ENCODE measurements at regions of chr6 and their contacts with region 1.

Region 1: GRCh38 chr6:2848851-2849250 is 7.2 kb upstream of the SERPINB1 start:
- DNase-seq: peak; percentile 30 to 87 (median 75)
- ATAC-seq: peak; percentile 88
- H3K4me3 ChIP-seq: no peak overlapping the region
- H3K4me3 Mint-ChIP-seq: peak overlapping the region; percentile 27
- H3K27ac ChIP-seq: peak overlapping the region; percentile 1 to 26
- H3K27ac Mint-ChIP-seq: peak overlapping the region; percentile 92
- H3K4me1 ChIP-seq: peaks cover 27% of the 10 kb centered on the region
- H3K4me1 Mint-ChIP-seq: peaks cover 40% of the 10 kb centered on the region
- H3K27me3 ChIP-seq: no peaks in the 10 kb centered on the region
- H3K27me3 Mint-ChIP-seq: no peaks in the 10 kb centered on the region
- CTCF ChIP-seq: no peak

Region 2: GRCh38 chr6:1911474-1911873 is 937.4 kb before region 1 on chr6:
- CTCF ChIA-PET with region 1: no interaction called
- POLR2A ChIA-PET with region 1: no interaction called
- intact Hi-C with region 1: no loop called
- DNase-seq: no peak
- ATAC-seq: no peak
- H3K4me3 ChIP-seq: no peak overlapping the region
- H3K4me3 Mint-ChIP-seq: no peak overlapping the region
- H3K27ac ChIP-seq: no peak overlapping the region
- H3K27ac Mint-ChIP-seq: no peak overlapping the region
- H3K4me1 ChIP-seq: no peaks in the 10 kb centered on the region
- H3K4me1 Mint-ChIP-seq: no peaks in the 10 kb centered on the region
- H3K27me3 ChIP-seq: no peaks in the 10 kb centered on the region
- H3K27me3 Mint-ChIP-seq: no peaks in the 10 kb centered on the region
- CTCF ChIP-seq: no peak

Region 3: GRCh38 chr6:2862712-2863181 is 13.9 kb after region 1 on chr6:
- CTCF ChIA-PET with region 1: interaction called, 41 read pairs
- POLR2A ChIA-PET with region 1: interaction called, 11 read pairs
- intact Hi-C with region 1: no loop called
- DNase-seq: peak in 3 of 9 experiments; percentile 28 to 35 (median 32)
- ATAC-seq: no peak
- H3K4me3 ChIP-seq: no peak overlapping the region
- H3K4me3 Mint-ChIP-seq: no peak overlapping the region
- H3K27ac ChIP-seq: peak overlapping the region in 1 of 2 experiments; percentile 80
- H3K27ac Mint-ChIP-seq: peak overlapping the region; percentile 93
- H3K4me1 ChIP-seq: peaks cover 50% of the 10 kb centered on the region
- H3K4me1 Mint-ChIP-seq: peaks cover 64% of the 10 kb centered on the region
- H3K27me3 ChIP-seq: no peaks in the 10 kb centered on the region
- H3K27me3 Mint-ChIP-seq: no peaks in the 10 kb centered on the region
- CTCF ChIP-seq: no peak

Region 4: DNA sequence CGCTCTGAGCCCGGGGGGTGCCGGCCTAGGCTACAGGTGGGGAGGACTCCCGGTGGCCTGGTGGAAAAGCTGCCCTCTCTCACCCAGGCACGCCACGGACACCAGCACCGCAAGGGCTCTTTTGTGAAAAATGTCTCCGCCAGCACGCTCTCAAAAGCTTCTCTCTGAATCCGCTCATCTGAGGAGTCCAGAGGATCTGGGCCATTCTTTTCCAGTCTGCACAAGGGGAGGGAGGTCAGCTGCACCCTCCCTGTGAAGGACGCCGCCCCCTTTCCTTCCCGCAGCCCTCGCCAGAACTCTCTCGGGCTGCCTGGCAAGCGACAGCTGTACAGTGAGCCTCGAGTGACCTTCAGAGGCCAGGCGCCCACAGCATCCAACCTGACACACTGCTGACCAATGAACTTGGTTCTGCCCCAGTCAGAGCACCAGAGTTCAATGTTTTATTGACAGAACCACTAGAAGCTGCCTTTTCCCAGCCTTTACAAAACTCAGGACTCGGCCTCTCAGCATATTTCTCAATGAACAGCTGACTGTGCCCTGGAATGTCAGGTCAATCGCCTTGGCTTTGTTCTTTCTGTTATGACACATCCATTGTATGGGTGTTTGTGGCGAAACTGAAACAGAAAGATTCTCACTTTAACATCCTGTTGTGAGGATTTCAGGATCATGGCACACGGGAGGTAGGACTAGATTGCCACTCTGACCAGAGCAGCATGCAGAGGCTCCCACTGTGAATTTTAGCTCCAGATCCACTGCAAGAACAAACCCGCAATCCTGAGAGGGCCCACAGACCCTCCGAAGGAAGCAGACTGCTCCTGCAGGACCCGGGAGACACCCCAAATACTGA is 27.6 kb after region 1 on chr6:
- CTCF ChIA-PET with region 1: interaction called, 8 read pairs
- POLR2A ChIA-PET with region 1: interaction called, 14 read pairs
- intact Hi-C with region 1: loop called in 1 of 2 experiments (anchors 2 kb)
- DNase-seq: peak in 3 of 9 experiments; percentile 38 to 67 (median 57)
- ATAC-seq: peak; percentile 9
- H3K4me3 ChIP-seq: peak overlapping the region; percentile 33 to 65
- H3K4me3 Mint-ChIP-seq: peak overlapping the region; percentile 87
- H3K27ac ChIP-seq: peak overlapping the region; percentile 24 to 77
- H3K27ac Mint-ChIP-seq: peak overlapping the region; percentile 93
- H3K4me1 ChIP-seq: peaks cover 68% of the 10 kb centered on the region
- H3K4me1 Mint-ChIP-seq: peaks cover 78% of the 10 kb centered on the region
- H3K27me3 ChIP-seq: no peaks in the 10 kb centered on the region
- H3K27me3 Mint-ChIP-seq: no peaks in the 10 kb centered on the region
- CTCF ChIP-seq: no peak

Region 5: DNA sequence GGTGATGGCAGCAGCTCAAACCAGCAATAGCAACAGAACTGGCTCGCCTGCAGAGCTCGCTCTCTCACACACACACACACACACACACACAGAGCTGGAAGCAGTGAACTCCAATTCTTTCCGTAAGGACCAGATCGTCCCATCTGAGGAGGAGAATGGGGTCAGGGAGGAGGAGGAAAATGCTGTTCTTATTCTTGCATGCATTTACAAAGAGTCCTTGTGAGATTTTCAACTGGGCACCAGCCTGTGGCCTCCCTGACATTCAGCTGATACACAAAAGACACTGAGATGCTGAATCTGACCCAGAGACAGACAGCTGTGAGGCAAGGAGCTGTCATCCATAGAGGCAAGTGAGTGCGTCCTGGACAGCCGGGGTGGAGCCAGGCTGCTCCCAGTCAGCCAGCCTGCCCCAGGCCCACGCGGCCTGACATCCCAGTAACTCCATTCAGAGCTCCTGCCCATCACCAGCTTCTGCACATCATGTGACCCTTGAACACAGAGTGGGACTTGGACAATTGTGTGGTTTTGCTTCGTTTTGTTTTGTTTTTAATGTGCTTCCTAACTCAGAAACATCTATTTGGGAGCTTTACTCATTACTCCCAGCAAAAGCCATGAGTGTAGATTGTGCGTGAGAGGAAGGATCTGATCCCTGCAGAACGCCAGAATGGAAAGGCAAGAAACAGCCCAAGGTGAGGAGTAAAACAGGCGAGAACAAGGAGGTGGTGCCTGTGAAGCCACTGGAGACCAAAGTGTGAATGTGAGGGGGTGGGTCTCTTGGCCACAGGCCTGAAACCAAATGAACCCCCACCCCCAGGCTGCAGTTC is 52.2 kb after region 1 on chr6:
- CTCF ChIA-PET with region 1: interaction called, 56 read pairs
- POLR2A ChIA-PET with region 1: interaction called, 17 read pairs
- intact Hi-C with region 1: no loop called
- DNase-seq: peak in 1 of 9 experiments; percentile 46
- ATAC-seq: no peak
- H3K4me3 ChIP-seq: peak overlapping the region; percentile 73 to 90
- H3K4me3 Mint-ChIP-seq: peak overlapping the region; percentile 99
- H3K27ac ChIP-seq: peak overlapping the region; percentile 67 to 82
- H3K27ac Mint-ChIP-seq: peak overlapping the region; percentile 96
- H3K4me1 ChIP-seq: peaks cover 37% of the 10 kb centered on the region
- H3K4me1 Mint-ChIP-seq: peaks cover 60% of the 10 kb centered on the region
- H3K27me3 ChIP-seq: no peaks in the 10 kb centered on the region
- H3K27me3 Mint-ChIP-seq: no peaks in the 10 kb centered on the region
- CTCF ChIP-seq: no peak

Region 6: DNA sequence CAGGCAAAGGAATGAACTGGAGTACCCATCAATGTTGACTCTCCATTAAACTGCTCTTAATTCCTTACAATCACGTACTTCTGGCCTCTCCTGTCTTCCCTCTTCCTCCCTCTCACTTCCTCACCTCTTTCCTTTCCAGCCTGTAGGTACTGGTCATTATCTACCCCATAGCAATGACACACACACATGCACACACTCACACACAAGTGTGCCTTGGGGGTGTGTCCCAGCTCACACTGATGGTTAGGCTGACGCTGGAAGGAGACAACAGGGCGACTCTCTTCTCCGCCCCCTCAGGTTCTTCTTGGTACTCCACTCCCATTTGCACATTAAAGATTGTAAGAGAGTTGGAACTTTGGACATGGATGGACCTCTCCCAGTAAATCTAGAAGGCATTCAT is 68.2 kb after region 1 on chr6:
- CTCF ChIA-PET with region 1: interaction called, 202 read pairs
- POLR2A ChIA-PET with region 1: interaction called, 24 read pairs
- intact Hi-C with region 1: no loop called
- DNase-seq: peak in 1 of 9 experiments; percentile 1
- ATAC-seq: no peak
- H3K4me3 ChIP-seq: no peak overlapping the region
- H3K4me3 Mint-ChIP-seq: no peak overlapping the region
- H3K27ac ChIP-seq: peak overlapping the region in 1 of 2 experiments; percentile 51
- H3K27ac Mint-ChIP-seq: no peak overlapping the region
- H3K4me1 ChIP-seq: no peaks in the 10 kb centered on the region
- H3K4me1 Mint-ChIP-seq: peaks cover 11% of the 10 kb centered on the region
- H3K27me3 ChIP-seq: no peaks in the 10 kb centered on the region
- H3K27me3 Mint-ChIP-seq: no peaks in the 10 kb centered on the region
- CTCF ChIP-seq: no peak